BJ (cell line): ENCODE measurements at regions of chr3 and their contacts with region 1.

Region 1: GRCh38 chr3:179015551-179016020 is 56.0 kb downstream of the ZMAT3 start:
- DNase-seq: peak; percentile 40
- H3K4me3 ChIP-seq: no peak overlapping the region
- H3K27me3 ChIP-seq: no peaks in the 10 kb centered on the region
- CTCF ChIP-seq: peak; percentile 79

Region 2: DNA sequence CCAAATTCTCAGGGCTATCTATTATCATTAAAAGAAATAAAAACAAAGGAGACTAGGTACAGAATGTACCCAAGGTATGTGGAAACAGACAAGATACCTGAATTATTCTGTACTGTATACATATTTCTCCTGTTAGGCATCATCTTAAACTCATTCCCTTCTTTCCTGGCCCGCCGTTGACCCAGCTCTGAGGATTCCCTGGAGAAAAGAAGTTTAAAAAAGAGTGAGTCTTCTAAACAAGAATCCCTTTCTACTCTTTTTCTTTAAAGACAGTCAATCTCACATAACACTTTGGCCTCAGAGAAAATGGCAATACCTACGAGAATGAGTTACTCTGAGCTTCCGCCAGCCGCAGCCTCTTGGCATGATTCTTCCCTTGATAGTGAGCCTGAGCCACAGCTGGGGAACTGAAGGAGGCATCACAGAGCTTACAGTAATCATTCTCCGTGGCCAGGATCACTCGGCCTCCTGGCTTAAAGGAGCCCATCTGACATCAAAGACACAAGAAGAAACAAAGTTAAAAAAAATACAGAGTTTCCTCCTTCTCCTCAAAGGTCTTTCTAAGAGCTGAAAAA is 11.8 kb after region 1 on chr3:
- CTCF ChIA-PET with region 1: interaction called, 15 read pairs
- POLR2A ChIA-PET with region 1: no interaction called
- DNase-seq: no peak
- H3K4me3 ChIP-seq: no peak overlapping the region
- H3K27me3 ChIP-seq: no peaks in the 10 kb centered on the region
- CTCF ChIP-seq: no peak

Region 3: DNA sequence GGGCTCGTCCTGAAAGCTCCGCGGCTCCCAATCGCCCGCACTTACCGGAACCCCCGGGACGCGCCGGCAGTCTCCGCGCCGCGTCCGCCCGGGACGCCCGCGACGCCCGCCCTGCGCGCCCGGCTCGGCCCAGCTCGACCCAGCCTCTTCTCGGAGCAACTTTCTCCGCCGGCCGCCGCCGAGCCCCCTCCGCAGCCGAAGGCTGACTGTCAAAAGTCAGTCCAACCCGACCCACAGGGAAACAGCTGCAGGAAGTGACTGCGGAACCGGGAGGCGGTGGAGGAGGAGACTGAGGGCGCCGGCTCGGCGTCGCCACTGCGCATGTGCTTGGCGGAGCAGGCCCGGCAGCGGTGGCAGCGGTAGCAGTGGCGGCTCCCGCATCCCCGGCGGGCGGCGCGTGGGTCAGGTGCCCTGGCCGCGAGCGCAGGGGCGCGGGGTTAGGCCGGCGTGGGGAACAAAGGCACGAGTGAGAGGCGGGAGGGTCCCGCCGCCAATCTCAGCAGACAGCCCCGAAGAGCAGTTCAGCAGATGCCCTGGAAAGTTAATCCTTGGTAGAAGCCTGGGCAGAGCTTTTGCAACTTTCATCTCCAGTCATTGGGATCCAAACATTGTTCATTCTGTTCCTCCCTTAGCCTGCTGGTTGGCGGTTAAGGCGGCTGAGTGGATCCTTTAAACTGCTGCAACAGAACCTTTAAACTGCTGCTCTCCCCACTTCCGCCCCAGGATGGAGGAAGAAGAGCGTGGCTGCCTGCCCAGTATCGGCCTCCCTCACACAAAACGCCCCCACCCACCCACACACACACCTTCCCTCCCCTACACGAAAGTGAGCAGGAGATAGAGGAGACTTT is 56.2 kb after region 1 on chr3 and contains the start of gene ZMAT3:
- CTCF ChIA-PET with region 1: interaction called, 13 read pairs
- POLR2A ChIA-PET with region 1: no interaction called
- DNase-seq: peak; percentile 29
- H3K4me3 ChIP-seq: peak within 1 kb of the TSS; percentile 55
- H3K27me3 ChIP-seq: no peaks in the 10 kb centered on the region
- CTCF ChIP-seq: no peak
- polyA plus RNA-seq, gene ZMAT3: 38.7 and 41.4 TPM in 2 replicates

Region 4: GRCh38 chr3:179224584-179224983 is 209.0 kb after region 1 on chr3:
- CTCF ChIA-PET with region 1: interaction called, 4 read pairs
- POLR2A ChIA-PET with region 1: interaction called, 17 read pairs
- DNase-seq: no peak
- H3K4me3 ChIP-seq: no peak overlapping the region
- H3K27me3 ChIP-seq: no peaks in the 10 kb centered on the region
- CTCF ChIP-seq: no peak